Heart left ventricle (tissue), 16 donors: ENCODE measurements at regions of chr3 and their contacts with region 1.

Region 1: DNA sequence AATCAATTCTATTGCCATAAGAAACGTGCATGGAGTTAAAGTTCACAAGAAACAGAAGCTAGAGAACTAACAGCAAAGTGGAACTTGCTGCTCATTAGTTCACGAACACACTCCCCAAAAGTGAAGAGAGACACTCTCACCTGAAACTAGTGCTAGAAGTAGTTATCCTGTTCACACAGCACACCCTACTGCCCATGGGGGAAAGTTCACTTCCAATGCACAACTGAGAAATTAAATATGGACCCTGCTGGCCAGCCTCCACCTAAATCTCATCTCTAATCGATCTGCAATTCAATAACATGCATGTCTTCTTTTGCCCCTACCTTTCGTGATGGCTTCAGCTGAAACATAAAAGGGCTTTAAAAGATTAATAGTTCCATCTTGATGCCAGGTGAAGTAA is 39.4 kb upstream of the FRMD4B start:
- DNase-seq: peak in 1 of 5 donors; percentile 30
- ATAC-seq: peak in 3 of 4 donors; percentile 56 to 70 (median 59)
- H3K4me3 ChIP-seq: no peak overlapping the region
- H3K27ac ChIP-seq: no peak overlapping the region
- H3K4me1 ChIP-seq: peaks cover 0 to 14% (median 10%) of the 10 kb centered on the region in 12 donors
- H3K27me3 ChIP-seq: no peaks in the 10 kb centered on the region
- CTCF ChIP-seq: peak; percentile 31 to 68 (median 52)
- POLR2A ChIP-seq: no peak

Region 2: DNA sequence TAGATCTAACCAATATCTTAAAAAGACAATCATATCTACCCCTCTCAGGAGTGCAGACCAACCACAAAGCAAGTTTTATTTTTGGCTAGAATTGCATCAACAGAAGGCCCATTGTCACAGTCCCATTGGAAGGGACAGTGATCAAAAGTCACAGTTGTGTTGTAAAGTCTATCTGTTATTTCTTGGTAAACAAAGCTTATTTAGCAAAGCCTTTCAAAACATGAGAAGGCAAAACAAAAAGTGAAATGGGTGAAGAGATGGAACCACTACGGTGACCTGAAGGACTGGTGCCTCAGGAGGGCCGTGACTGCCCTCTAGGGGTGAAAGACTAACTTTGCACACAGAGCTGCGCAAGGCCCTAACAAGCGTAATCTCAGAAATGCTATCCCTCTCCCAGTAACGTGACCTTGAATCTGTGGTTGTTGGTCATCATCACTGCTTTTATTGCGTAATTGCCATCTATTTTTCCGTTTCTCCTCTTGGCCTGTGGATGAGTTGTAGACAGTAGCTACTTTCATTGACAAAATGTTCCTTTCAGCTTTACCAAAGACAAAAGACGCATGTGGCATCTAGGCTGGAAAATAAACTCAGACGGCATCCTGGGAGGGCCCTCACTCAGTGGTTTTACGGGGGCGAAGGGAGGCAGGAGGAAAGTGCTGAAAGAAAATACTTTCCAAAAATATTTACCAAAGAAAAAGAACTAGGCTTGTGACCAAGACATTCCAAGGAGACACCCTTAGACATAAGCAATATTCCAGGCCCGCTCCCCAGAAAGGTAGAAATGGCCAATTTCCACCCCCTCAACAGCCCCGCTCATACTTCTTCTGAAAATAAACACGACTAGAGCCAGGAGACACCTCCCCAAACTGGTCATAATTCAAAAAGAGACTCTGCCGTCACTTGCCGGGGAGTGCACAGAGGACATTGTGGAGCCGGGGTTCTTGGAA is 118.7 kb before region 1 on chr3:
- intact Hi-C with region 1: loop called in 1 of 10 experiments (anchors 5 kb)
- DNase-seq: peak; percentile 66 to 82 (median 78)
- ATAC-seq: peak; percentile 80 to 98 (median 94)
- H3K4me3 ChIP-seq: no peak overlapping the region
- H3K27ac ChIP-seq: peak overlapping the region in 10 of 12 donors; percentile 26 to 83 (median 70)
- H3K4me1 ChIP-seq: peaks cover 0 to 21% (median 7%) of the 10 kb centered on the region in 12 donors
- H3K27me3 ChIP-seq: no peaks in the 10 kb centered on the region
- CTCF ChIP-seq: peak; percentile 88 to 99 (median 94)
- POLR2A ChIP-seq: no peak